CD14-positive monocyte (primary cell): ENCODE measurements at regions of chr10 and their contacts with region 1.

Region 1: DNA sequence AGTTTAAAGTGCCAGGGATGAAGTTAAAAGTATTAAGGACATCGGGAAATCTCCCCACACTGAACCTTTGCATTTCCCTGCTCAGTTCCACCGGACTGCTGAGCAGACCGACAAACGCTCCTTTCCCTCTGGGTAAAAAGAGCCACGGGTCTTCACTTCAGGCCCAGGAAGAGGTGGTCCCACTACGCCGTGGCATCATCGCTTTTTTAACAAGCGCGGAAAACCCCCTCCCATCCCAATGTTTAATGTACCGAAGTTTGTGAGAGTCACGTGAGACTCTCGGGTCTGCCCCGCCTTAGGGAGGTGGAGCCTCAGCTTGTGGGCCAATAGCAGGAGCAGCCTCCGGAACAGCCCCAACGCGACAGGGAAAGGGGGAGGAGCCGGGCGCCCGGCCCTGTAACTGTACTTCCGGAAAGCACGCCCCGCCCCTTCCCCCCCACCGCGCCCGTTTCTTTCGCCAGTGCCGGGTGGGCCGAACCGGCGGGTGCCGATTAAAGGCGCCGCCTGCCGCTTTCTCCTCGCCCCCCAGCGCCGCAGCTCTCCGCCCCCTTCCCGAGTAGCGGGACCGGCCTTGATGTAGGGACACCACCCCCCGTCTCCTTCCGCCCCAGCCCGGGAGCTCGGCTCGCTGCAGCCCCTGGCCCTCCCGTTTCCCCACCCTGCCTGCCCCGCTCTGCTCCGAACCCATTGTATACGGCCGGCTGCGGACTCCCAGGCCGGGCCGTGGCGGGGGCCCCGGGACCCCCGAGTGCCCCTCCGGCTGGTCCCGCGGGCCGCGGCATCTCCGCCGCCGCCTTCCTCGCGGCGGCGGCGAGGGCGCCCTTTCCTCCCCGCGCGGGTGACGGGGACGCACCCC is 2.2 kb upstream of the TRIM8 start:
- DNase-seq: peak; percentile 96 to 98 (median 97)
- H3K4me3 ChIP-seq: peak overlapping the region; percentile 71 to 99 (median 76)
- H3K4me3 Mint-ChIP-seq: peak overlapping the region; percentile 80 to 94
- H3K27ac ChIP-seq: peak overlapping the region; percentile 85 to 99
- H3K27ac Mint-ChIP-seq: peak overlapping the region; percentile 91 to 98 (median 95)
- H3K4me1 ChIP-seq: peaks cover 12 to 15% of the 10 kb centered on the region in 2 donors
- H3K4me1 Mint-ChIP-seq: peaks cover 14% of the 10 kb centered on the region
- H3K27me3 ChIP-seq: no peaks in the 10 kb centered on the region
- H3K27me3 Mint-ChIP-seq: peaks cover 2 to 6% (median 5%) of the 10 kb centered on the region in 3 donors
- CTCF ChIP-seq: no peak

Region 2: GRCh38 chr10:102583435-102584417 is 58.4 kb before region 1 on chr10:
- intact Hi-C with region 1: no loop called
- DNase-seq: peak; percentile 68 to 85 (median 78)
- H3K4me3 ChIP-seq: no peak overlapping the region
- H3K4me3 Mint-ChIP-seq: no peak overlapping the region
- H3K27ac ChIP-seq: no peak overlapping the region
- H3K27ac Mint-ChIP-seq: no peak overlapping the region
- H3K4me1 ChIP-seq: peaks cover 19% of the 10 kb centered on the region in 2 donors
- H3K4me1 Mint-ChIP-seq: peaks cover 23% of the 10 kb centered on the region
- H3K27me3 ChIP-seq: no peaks in the 10 kb centered on the region
- H3K27me3 Mint-ChIP-seq: peaks cover 0 to 3% (median 0%) of the 10 kb centered on the region in 3 donors
- CTCF ChIP-seq: peak; percentile 87

Region 3: DNA sequence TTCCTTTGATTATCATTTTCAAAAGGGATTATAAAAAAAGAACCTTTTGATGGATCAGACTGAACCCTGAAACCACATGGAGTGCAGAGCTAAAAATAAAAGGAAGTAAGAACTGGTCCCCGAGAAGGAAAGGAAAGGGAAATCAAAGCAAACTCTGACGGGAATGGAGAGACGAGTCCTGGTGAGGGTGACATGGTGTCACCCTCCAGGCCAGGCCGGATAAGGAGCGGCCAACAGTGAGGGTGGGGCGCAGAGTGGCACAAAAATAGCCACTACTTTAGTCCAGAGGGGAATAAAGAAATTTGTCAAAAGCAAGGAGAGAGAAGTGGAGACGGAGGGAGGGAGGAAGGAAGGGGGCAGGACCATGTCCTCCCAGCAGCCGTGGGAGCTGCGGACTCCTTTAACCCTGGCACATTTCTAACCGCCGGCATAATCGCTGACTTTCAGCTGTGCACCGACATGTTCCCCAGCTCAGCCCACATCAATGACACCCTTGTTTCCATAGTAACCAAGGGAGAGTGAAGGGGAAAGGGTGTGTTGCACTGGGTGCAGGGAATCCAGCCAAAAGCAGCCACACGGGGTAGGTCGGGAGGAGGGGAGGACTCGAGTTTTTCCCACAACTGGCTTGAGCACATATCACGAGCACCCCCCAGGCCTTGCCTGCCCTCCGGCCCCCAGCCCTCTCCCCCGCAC is 31.9 kb after region 1 on chr10:
- intact Hi-C with region 1: loop called (anchors 2 kb)
- DNase-seq: peak; percentile 74 to 78 (median 78)
- H3K4me3 ChIP-seq: peak overlapping the region; percentile 20 to 74 (median 45)
- H3K4me3 Mint-ChIP-seq: peak overlapping the region; percentile 85 to 90
- H3K27ac ChIP-seq: peak overlapping the region; percentile 91 to 93
- H3K27ac Mint-ChIP-seq: peak overlapping the region; percentile 98 to 100 (median 99)
- H3K4me1 ChIP-seq: peaks cover 73 to 79% of the 10 kb centered on the region in 2 donors
- H3K4me1 Mint-ChIP-seq: peaks cover 81% of the 10 kb centered on the region
- H3K27me3 ChIP-seq: no peaks in the 10 kb centered on the region
- H3K27me3 Mint-ChIP-seq: no peaks in the 10 kb centered on the region
- CTCF ChIP-seq: no peak

Region 4: DNA sequence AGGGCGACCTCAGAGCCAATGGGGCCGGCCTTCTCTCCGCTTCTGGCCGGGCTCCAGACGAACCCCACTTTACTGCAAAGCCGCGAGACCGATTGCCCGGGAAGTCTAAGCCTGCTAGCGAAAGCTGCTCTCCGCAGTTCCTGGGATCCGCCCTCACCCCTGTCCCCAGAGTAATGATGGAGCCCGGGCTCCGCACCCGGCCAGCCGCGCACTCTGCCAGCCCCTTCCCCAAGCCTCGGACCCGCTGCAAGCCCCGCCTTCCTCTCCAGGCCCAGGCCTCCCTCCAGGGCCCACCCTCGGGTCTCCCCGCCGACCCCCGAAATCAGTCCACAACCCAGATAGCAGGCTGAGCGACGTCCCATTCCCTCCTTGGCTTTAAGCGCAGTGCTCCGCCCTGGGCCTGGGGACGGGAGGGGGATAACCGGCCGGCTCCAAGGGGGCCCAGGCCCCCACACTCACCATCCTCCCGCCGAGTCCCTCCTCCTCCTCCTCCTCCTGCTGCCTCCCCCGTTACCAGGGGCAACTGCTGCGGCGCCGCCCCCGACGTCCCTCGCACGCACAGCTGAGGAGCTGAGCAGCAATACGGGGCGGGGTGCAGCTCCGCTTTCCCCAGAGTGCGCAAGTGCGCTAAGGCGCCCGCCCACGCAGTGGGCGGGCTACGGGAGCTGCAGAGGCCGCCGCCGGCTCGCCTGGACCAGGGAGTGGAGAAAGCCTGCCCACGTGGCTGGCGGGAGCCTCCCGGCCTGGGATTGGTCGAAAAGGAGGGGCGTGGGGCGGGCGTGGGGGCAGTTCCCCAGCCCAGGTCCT is 71.9 kb after region 1 on chr10 and contains the start of gene ARL3:
- intact Hi-C with region 1: loop called in 1 of 2 experiments (anchors 5 kb)
- DNase-seq: peak; percentile 95 to 98 (median 96)
- H3K4me3 ChIP-seq: peak within 1 kb of the TSS; percentile 84 to 98 (median 89)
- H3K4me3 Mint-ChIP-seq: peak within 1 kb of the TSS; percentile 98
- H3K27ac ChIP-seq: peak within 1 kb of the TSS; percentile 79 to 95
- H3K27ac Mint-ChIP-seq: peak within 1 kb of the TSS; percentile 65 to 94 (median 93)
- H3K4me1 ChIP-seq: peaks cover 14 to 27% of the 10 kb centered on the region in 2 donors
- H3K4me1 Mint-ChIP-seq: peaks cover 29% of the 10 kb centered on the region
- H3K27me3 ChIP-seq: no peaks in the 10 kb centered on the region
- H3K27me3 Mint-ChIP-seq: peaks cover 0 to 3% (median 2%) of the 10 kb centered on the region in 3 donors
- CTCF ChIP-seq: peak; percentile 73
- polyA plus RNA-seq, gene ARL3: 2.8 to 6.3 (median 6.0) TPM